Posterior vena cava (tissue), 2 donors: ENCODE measurements at regions of chr2 and their contacts with region 1.

Region 1: GRCh38 chr2:2516386-2516785 is 185.3 kb upstream of the MYT1L start:
- DNase-seq: no peak

Region 2: GRCh38 chr2:2547451-2547850 is 31.1 kb after region 1 on chr2:
- intact Hi-C with region 1: loop called in 1 of 2 experiments (anchors 1 kb)
- DNase-seq: peak; percentile 13